ENCODE measurements at regions of chr13 and their contacts with region 1.

Region 1: GRCh38 chr13:113208424-113209335 is at the start of gene PCID2:
- DNase-seq: peak; percentile 91
- H3K4me3 Mint-ChIP-seq: peak within 1 kb of the TSS; percentile 92
- H3K27ac Mint-ChIP-seq: peak within 1 kb of the TSS; percentile 81
- H3K4me1 Mint-ChIP-seq: peaks cover 65% of the 10 kb centered on the region
- H3K27me3 Mint-ChIP-seq: no peaks in the 10 kb centered on the region
- total RNA-seq, gene PCID2: 58.9 to 66.2 TPM

Region 2: GRCh38 chr13:112968908-112969691 is 239.6 kb before region 1 on chr13 and contains the start of gene MCF2L:
- CTCF ChIA-PET with region 1: no interaction called
- POLR2A ChIA-PET with region 1: interaction called, 10 read pairs
- DNase-seq: peak; percentile 43
- H3K4me3 Mint-ChIP-seq: peak within 1 kb of the TSS; percentile 64
- H3K27ac Mint-ChIP-seq: no peak within 1 kb of the TSS
- H3K4me1 Mint-ChIP-seq: peaks cover 14% of the 10 kb centered on the region
- H3K27me3 Mint-ChIP-seq: peaks cover 30% of the 10 kb centered on the region
- total RNA-seq, gene MCF2L: 0.33 to 0.86 TPM

Region 3: GRCh38 chr13:113179374-113180230 is 29.1 kb before region 1 on chr13:
- CTCF ChIA-PET with region 1: interaction called, 4 read pairs
- POLR2A ChIA-PET with region 1: interaction called, 77 read pairs
- DNase-seq: peak; percentile 40
- H3K4me3 Mint-ChIP-seq: peak overlapping the region; percentile 35
- H3K27ac Mint-ChIP-seq: peak overlapping the region; percentile 88
- H3K4me1 Mint-ChIP-seq: peaks cover 83% of the 10 kb centered on the region
- H3K27me3 Mint-ChIP-seq: no peaks in the 10 kb centered on the region

Region 4: GRCh38 chr13:113192902-113193301 is 15.8 kb before region 1 on chr13:
- CTCF ChIA-PET with region 1: no interaction called
- POLR2A ChIA-PET with region 1: interaction called, 77 read pairs
- DNase-seq: no peak
- H3K4me3 Mint-ChIP-seq: no peak overlapping the region
- H3K27ac Mint-ChIP-seq: no peak overlapping the region
- H3K4me1 Mint-ChIP-seq: peaks cover 17% of the 10 kb centered on the region
- H3K27me3 Mint-ChIP-seq: no peaks in the 10 kb centered on the region

Region 5: DNA sequence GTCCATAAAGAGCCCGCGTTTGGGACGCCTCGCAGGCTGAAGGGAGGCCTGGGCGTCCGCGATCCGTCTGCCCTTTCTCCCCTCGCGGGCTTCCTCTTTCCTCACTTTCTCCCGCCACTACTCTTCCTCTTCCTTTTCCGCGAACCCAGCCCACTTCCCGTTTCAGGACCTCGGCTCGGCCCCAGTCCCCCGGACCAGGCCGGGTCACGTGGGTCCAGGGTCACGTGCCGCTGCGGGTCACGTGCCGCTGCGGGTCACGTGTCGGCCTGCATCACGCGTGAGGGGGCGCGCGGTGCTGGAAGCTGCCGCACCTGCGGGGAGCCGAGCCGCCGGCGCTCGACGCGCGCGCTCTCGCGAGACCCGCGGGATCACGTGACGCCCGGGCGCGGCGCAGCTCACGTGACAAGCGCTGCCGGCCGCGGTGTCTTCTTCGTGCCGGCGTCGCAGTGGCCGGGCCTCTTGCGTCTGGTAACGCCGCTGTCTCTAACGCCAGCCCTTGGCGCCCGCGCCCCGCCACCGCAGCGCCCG is 88.2 kb after region 1 on chr13 and contains the start of gene LAMP1:
- CTCF ChIA-PET with region 1: no interaction called
- POLR2A ChIA-PET with region 1: interaction called, 26 read pairs
- DNase-seq: peak; percentile 98
- H3K4me3 Mint-ChIP-seq: peak within 1 kb of the TSS; percentile 92
- H3K27ac Mint-ChIP-seq: peak within 1 kb of the TSS; percentile 94
- H3K4me1 Mint-ChIP-seq: peaks cover 35% of the 10 kb centered on the region
- H3K27me3 Mint-ChIP-seq: peaks cover 26% of the 10 kb centered on the region
- total RNA-seq, gene LAMP1: 79.5 to 80.7 TPM